HCT116 (cell line): ENCODE measurements at regions of chr3 and their contacts with region 1.

Region 1: GRCh38 chr3:38283810-38284755 is 2.0 kb downstream of the SLC22A14 start:
- DNase-seq: no peak
- ATAC-seq: no peak
- H3K4me3 ChIP-seq: no peak overlapping the region
- H3K27ac ChIP-seq: no peak overlapping the region
- H3K4me1 ChIP-seq: no peaks in the 10 kb centered on the region
- H3K27me3 ChIP-seq: no peaks in the 10 kb centered on the region
- CTCF ChIP-seq: no peak
- POLR2A ChIP-seq: no peak
- RAD21 ChIP-seq: no peak

Region 2: GRCh38 chr3:38186781-38187180 is 97.3 kb before region 1 on chr3:
- CTCF ChIA-PET with region 1: no interaction called
- POLR2A ChIA-PET with region 1: no interaction called
- RAD21 ChIA-PET with region 1: no interaction called
- intact Hi-C with region 1: no loop called
- DNase-seq: no peak
- ATAC-seq: no peak
- H3K4me3 ChIP-seq: no peak overlapping the region
- H3K27ac ChIP-seq: no peak overlapping the region
- H3K4me1 ChIP-seq: peaks cover 0 to 6% of the 10 kb centered on the region in 2 experiments; a peak in 2 of 4 replicates
- H3K27me3 ChIP-seq: no peaks in the 10 kb centered on the region
- CTCF ChIP-seq: no peak
- POLR2A ChIP-seq: no peak
- RAD21 ChIP-seq: no peak

Region 3: DNA sequence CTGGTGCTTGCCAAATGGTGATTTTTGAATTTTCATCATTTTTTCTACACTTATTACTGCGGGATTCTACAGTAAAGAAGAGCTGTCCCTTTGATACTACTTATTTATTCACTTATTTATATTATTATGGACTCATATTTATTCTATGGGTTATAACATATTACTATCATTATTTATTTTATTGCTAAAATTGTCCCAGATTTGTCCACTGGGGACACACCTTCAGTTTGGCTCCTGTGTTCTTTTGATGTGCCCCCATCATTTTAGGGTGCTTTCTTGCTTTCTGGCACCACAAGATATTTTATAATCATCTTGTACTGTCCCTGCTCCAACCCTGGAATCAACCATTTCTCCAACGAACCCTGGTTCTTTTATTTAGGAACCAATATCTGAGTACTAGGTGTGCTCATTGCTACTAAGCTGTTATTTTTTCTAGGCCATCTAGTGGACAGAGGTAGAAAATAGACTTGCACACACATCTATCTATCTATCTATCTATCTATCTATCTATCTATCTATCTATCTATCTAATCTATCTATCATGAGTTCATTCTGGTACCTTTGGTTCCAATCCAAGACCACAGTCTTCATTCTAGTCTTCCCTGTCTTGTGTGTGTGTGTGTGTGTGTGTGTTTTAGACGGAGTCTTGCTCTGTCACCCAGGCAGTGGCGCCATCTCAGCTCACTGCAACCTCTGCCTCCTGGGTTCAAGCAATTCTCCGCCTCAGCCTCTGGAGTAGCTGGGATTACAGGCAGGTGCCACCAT is 14.0 kb after region 1 on chr3:
- CTCF ChIA-PET with region 1: interaction called, 11 read pairs
- POLR2A ChIA-PET with region 1: no interaction called
- RAD21 ChIA-PET with region 1: no interaction called
- intact Hi-C with region 1: no loop called
- DNase-seq: peak; percentile 15
- ATAC-seq: peak; percentile 97
- H3K4me3 ChIP-seq: no peak overlapping the region
- H3K27ac ChIP-seq: no peak overlapping the region
- H3K4me1 ChIP-seq: no peaks in the 10 kb centered on the region
- H3K27me3 ChIP-seq: no peaks in the 10 kb centered on the region
- CTCF ChIP-seq: peak; percentile 63 to 89 (median 82)
- POLR2A ChIP-seq: no peak
- RAD21 ChIP-seq: peak; percentile 45